Activated naive CD4-positive, alpha-beta T cell treated with anti-CD3 and anti-CD28 coated beads, Interleukin-2, amount 10 ng/mL, durations not matched to agents 7 days and 5 days (primary cell): ENCODE measurements at regions of chr17 and their contacts with region 1.

Region 1: DNA sequence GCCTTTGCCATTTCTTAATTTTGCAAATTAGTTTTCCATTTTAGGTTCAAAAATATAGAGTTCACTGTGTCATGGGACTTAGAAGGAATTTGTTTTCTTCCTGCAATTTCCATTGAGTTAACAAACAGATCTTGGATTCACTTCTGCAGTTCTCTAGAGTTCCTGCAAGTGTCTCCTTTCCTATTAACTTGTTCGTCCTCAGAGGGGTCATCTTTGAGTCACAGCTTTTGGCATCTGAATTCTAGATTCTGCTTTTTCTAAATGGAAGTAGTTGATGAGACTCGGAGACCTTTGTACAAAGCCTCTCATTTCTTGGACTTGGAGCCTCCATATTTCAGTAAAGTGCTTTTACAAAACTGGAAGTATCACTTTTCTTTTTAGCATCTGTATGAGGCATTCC is 323.3 kb downstream of the BCAS3 start:
- DNase-seq: no peak
- H3K4me3 Mint-ChIP-seq: no peak overlapping the region
- H3K27ac Mint-ChIP-seq: no peak overlapping the region
- H3K4me1 Mint-ChIP-seq: peaks cover 6% of the 10 kb centered on the region
- H3K27me3 Mint-ChIP-seq: no peaks in the 10 kb centered on the region

Region 2: DNA sequence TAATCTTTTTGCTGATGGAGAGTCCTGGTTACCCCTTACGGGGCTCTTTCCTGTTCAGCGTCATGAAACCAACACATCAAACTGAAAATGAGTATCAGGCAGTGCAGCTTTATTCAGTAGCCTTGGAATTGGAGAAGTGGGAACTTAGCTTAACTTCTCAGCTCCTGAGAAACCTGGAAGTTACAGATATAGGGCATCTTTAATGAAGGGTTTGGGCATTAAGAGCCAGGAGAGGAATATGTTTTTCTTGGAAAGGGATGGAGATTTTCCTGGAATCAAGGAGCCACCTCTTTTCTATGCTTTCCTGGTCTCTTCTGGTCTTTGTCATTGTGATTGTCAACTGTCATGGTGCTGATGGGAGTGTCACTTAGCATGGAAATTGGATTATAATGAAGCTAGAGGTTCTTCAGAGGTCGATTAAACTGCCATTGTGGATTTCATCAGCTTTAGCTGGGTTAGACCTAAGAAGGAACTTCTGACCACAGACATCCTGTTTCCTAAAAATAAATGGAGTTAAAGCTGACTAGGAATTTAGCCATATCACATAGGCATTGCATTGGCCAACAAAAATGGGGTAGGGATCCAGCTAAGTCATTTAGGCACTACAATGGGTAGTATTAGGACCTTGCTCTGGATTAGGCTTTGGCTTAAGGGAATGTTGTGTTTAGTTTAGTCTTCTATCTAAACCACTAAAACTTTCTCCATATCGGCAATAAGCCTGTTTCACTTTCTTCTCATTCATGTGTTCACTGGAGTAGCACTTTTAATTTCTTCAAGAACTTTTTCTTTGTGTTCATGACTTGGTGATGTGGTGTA is 136.8 kb before region 1 on chr17:
- CTCF ChIA-PET with region 1: no interaction called
- DNase-seq: no peak
- H3K4me3 Mint-ChIP-seq: no peak overlapping the region
- H3K27ac Mint-ChIP-seq: no peak overlapping the region
- H3K4me1 Mint-ChIP-seq: peaks cover 14% of the 10 kb centered on the region
- H3K27me3 Mint-ChIP-seq: no peaks in the 10 kb centered on the region

Region 3: DNA sequence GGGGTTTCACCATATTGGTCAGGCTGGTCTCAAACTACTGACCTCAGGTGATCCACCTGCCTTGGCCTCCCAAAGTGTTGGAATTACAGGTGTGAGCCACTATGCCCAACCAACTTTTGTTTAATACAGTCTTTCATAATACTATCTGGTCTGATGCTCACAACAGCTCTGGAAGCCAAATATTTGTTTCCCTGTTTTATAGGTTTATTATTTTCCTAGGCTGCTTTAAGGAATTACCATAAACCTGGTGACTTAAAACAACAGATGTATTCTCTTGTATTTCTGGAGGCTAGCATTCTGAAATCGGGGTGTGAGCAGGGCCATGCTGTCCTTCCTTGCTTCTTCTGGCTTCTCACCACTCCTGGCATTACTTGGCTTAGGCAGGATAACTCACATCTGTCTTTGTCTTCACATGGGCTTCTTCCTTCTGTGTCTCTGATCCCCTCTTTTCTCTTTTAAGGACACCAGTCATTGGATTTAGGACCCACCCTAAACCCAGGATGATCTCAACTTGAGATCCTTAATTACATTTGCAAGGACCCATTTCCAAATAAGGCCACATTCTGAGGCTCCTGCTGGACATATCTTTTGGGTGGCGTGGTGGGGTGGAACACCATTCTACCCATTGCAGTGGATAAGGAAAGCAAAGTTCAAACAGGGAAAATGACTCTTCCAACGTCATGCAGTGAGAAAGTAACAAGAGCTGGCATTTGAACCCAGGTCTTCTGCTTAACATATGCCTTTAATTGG is 359.5 kb after region 1 on chr17:
- CTCF ChIA-PET with region 1: interaction called, 20 read pairs
- DNase-seq: no peak
- H3K4me3 Mint-ChIP-seq: no peak overlapping the region
- H3K27ac Mint-ChIP-seq: no peak overlapping the region
- H3K4me1 Mint-ChIP-seq: no peaks in the 10 kb centered on the region
- H3K27me3 Mint-ChIP-seq: no peaks in the 10 kb centered on the region